Activated CD4-positive, alpha-beta T cell treated with anti-CD3 and anti-CD28 coated beads, Interleukin-2, amount 10 ng/mL, durations not matched to agents 24 days and 14 days (primary cell): ENCODE measurements at regions of chr2 and their contacts with region 1.

Region 1: DNA sequence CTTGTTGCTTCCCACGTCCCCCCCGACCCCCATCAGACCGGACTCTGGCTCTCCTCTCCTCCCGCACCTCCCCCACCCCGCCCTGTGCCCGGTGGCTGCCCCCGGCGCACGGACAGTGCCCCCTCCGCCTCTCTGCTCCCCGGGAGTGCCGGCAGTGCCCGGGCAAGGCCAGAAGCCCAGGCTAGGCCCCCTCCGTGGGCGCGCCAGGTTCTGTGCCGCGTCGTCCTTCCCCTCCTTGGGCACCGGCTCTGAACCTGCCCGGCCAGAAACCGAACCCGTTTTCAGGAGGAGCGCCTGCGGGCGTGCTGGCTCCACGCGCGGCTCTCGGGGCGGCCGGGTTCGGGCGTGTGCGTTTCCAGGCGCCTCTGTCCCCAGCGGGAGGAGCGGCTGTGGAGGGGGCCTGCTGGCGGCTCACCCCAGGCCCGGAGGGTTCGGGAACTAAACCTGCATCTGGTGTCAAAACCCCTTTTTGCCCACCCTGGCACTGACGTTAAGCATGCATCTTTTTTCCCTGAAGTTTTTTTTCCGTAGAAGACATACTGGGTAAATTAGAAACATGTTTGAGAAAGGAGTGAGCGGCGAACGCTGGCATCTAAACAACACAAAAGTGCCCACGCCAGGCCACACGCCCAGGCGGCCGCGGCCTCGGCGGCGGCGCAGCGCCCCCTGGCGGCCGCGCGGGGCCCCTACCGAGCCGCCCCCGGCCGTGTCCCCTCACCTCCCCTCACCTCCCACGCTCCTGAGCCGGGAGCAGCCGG is 123.9 kb upstream of the SLC1A4 start:
- DNase-seq: peak; percentile 91
- H3K4me3 Mint-ChIP-seq: peak overlapping the region; percentile 73
- H3K27ac Mint-ChIP-seq: no peak overlapping the region
- H3K4me1 Mint-ChIP-seq: peaks cover 3% of the 10 kb centered on the region
- H3K27me3 Mint-ChIP-seq: peaks cover 14% of the 10 kb centered on the region

Region 2: DNA sequence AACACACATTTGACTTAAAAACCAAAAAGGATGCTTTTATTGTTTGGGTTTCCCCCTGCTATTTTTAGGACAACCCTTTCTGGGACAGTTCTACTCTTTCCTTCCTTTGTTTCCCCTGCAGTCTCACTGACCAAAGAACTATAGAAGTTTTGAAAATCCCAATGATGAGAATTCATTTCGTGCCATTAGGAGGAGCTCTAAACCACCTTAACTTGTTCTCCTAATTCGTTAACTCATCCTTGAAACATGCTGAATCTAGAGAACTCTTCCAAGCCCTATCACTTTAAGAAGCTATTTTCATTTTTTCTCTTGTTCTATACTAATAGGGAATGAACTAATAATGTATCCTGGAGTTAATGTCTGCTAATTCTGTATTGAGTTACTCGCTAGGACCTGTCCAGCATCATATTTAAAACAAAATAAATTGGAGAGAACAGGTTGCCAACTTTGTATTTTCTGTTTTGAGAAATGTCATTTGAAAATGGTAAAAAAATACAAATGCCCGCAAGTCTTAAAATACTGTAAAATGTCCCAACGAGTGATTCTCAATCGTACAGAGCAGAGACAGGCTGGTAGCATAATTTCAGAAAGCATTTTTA is 278.3 kb before region 1 on chr2:
- intact Hi-C with region 1: loop called (anchors 1 kb)
- DNase-seq: peak; percentile 66
- H3K4me3 Mint-ChIP-seq: no peak overlapping the region
- H3K27ac Mint-ChIP-seq: no peak overlapping the region
- H3K4me1 Mint-ChIP-seq: peaks cover 19% of the 10 kb centered on the region
- H3K27me3 Mint-ChIP-seq: no peaks in the 10 kb centered on the region

Region 3: DNA sequence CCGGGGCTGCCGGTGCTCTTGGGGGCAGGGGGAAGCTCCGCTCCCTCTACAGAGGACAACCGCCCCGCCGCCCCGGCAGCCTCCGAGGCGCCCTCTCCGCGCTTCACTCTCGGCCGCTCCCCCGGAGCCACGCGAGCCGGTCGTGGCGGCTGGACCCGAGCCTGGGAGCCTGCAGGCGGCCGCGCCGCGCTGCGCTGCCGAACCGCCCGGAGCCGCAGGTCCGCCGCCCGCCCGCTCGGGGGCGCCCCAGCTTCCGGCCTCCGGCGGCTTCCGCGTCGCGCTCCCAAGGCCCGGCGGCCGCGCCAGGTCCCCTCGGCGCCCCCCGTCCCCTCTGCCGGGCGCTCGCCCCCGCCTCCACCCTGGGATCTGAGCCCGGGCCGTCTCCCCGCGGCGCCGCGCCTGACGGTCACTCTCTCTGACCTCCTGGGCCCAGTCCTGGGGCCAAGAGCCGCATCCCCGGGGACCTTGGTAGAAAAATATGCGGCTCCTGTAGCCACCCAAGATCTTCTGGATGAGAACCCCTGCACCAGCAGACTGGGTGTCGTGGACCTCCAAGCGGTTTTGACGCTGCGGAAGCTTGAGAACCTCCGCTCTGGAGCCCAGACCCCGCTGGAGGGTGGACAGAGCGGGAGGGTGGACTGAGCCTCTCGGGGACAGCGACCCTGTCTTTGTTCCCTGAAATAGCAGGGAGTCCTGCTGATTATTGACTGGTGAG is 255.9 kb before region 1 on chr2:
- intact Hi-C with region 1: loop called (anchors 1 kb)
- DNase-seq: peak; percentile 93
- H3K4me3 Mint-ChIP-seq: peak overlapping the region; percentile 76
- H3K27ac Mint-ChIP-seq: peak overlapping the region; percentile 74
- H3K4me1 Mint-ChIP-seq: peaks cover 24% of the 10 kb centered on the region
- H3K27me3 Mint-ChIP-seq: peaks cover 20% of the 10 kb centered on the region